ENCODE measurements at regions of chr3 and their contacts with region 1.

Region 1: DNA sequence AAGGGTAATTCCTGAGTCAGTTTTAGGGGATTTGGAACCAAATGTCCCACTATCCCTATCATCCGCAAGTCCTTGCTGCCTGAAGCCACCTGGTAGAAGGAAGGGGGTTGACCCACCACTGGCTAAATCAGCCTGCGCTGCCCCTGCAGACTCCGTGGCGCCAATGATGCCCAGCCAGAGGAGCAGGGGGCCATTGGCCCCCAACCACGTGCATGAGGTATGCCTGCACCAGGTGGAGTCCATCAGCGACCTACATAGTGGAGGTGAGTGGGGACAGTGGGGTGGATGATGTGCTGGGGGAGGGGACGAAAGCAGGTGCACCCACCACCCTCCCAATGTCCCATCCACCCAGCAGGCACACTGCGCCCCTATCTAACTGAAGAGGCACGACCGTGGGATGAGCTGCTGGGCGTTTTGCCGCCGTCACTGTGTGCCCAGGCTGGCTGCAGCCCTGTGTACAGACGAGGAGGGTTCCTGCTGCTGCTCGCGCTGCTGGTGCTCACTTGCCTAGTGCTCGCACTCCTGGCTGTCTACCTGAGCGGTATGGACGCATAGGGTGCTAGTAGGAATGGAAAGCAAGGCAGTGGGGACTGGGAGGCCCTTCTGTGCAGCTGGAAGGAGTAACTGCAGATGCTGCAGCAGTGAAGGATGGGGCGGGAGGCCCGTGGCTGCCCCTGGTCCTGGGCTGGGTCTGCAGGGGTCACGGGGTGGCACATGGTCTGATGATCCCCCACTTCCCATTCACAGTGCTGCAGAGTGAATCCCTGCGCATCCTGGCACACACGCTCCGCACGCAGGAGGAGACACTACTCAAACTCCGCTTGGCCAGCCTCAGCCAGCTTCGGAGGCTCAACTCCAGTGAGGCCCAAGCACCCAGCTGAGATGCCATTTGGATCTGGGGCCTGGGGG is 5.7 kb downstream of the IFRD2 start:
- DNase-seq: no peak
- H3K4me3 ChIP-seq: no peak overlapping the region
- H3K27ac ChIP-seq: no peak overlapping the region
- H3K4me1 ChIP-seq: peaks cover 5 to 7% of the 10 kb centered on the region in 2 donors
- H3K27me3 ChIP-seq: no peaks in the 10 kb centered on the region
- CTCF ChIP-seq: no peak
- POLR2A ChIP-seq: no peak

Region 2: GRCh38 chr3:50121416-50122032 is 165.1 kb before region 1 on chr3:
- intact Hi-C with region 1: loop called in 1 of 2 experiments (anchors 10 kb)
- DNase-seq: peak; percentile 71 to 87 (median 76)
- H3K4me3 ChIP-seq: no peak overlapping the region
- H3K27ac ChIP-seq: no peak overlapping the region
- H3K4me1 ChIP-seq: no peaks in the 10 kb centered on the region
- H3K27me3 ChIP-seq: no peaks in the 10 kb centered on the region
- CTCF ChIP-seq: peak; percentile 75 to 88 (median 84)
- POLR2A ChIP-seq: no peak

Region 3: DNA sequence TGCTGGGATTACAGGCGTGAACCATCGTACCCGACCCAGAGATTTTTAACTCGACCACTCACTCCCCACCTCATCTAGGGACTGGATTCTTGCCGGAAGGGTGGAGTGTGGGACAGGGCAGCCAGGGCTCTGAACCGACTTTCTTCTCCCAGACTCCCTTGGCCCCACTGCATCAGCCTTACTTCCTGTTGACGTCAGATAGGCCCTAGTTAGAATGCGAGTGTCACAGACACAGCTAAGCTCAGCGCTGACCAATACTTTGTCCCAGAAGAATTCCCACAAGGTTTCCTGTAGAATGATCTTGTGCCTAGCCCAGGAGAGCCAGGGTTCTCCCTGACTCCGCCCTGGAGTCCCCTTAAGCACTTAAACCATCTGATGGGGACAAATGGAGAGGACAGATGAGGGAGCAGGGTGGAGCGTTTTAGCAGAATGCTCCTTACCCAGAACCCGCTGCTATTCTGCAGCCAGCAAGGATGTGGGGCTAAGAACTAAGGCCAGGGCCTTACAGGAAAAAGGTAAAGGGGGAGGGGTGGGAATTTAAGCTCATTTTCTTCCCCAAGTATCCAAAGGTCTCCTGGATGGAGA is 47.3 kb after region 1 on chr3:
- intact Hi-C with region 1: loop called in 1 of 2 experiments (anchors 5 kb)
- DNase-seq: peak in 1 of 7 donors; percentile 44
- H3K4me3 ChIP-seq: no peak overlapping the region
- H3K27ac ChIP-seq: peak overlapping the region in 4 of 5 donors; percentile 22 to 98 (median 58)
- H3K4me1 ChIP-seq: peaks cover 29 to 51% of the 10 kb centered on the region in 2 donors
- H3K27me3 ChIP-seq: no peaks in the 10 kb centered on the region
- CTCF ChIP-seq: no peak
- POLR2A ChIP-seq: peak in 1 of 2 donors; percentile 10

Region 4: DNA sequence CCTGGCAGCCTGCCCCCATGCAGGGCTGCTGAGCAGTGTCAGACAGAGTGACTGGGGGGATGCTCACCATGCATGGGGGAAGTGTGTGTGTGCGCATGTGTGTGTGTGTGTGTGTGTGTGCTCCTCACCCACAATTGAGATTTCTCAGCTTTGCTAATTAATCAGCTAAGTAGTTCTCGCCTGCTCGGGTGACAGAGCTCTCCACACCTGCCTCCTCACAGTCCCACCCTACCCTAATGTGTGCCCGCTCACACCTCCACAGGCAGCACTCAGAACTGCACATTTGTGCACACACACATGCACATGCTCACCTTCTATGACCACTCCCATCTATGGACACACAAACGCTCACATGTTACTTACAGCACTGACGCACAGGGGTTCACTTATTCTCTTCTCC is 179.6 kb after region 1 on chr3:
- intact Hi-C with region 1: no loop called
- DNase-seq: no peak
- H3K4me3 ChIP-seq: no peak overlapping the region
- H3K27ac ChIP-seq: no peak overlapping the region
- H3K4me1 ChIP-seq: no peaks in the 10 kb centered on the region
- H3K27me3 ChIP-seq: no peaks in the 10 kb centered on the region
- CTCF ChIP-seq: no peak
- POLR2A ChIP-seq: no peak

Measured in adrenal gland (tissue), 19 donors.